ENCODE measurements at regions of chr1 and their contacts with region 1.

Region 1: DNA sequence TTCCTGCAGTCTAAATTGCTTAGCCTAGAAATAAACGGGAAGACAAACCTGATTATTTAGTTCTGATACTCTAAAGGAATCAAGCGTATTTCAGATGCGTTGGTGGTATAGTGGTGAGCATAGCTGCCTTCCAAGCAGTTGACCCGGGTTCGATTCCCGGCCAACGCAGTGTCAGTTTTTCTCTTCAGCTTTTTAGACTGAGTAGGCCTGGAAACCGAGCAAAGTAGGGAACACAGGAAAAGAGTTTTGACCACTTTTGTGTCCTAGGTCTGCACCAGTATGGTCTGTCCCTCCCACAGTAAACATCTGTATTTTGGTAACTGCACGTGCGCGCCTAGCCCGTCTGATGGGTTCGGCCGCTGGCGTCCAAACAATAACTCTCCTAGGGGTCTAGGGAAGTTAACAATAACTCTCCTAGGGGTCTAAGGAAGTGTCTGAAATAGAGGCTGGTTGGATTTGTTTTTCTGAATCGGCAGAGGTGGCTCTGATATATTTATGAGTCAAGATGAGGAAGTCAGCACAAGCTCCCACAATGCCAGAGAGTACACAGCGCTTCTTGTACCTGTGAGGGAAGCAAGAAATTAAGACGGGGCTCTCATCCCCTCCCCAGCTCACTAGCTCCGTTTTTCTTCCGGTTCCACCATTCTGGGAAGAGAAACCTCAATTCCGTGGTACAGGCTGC is 15.6 kb upstream of the HJV start:
- DNase-seq: peak; percentile 94
- H3K4me3 ChIP-seq: peak overlapping the region; percentile 53 to 90 (median 64)
- H3K27ac ChIP-seq: peak overlapping the region; percentile 69
- H3K4me1 ChIP-seq: peaks cover 9% of the 10 kb centered on the region
- H3K27me3 ChIP-seq: no peaks in the 10 kb centered on the region
- CTCF ChIP-seq: no peak
- POLR2A ChIP-seq: no peak

Region 2: DNA sequence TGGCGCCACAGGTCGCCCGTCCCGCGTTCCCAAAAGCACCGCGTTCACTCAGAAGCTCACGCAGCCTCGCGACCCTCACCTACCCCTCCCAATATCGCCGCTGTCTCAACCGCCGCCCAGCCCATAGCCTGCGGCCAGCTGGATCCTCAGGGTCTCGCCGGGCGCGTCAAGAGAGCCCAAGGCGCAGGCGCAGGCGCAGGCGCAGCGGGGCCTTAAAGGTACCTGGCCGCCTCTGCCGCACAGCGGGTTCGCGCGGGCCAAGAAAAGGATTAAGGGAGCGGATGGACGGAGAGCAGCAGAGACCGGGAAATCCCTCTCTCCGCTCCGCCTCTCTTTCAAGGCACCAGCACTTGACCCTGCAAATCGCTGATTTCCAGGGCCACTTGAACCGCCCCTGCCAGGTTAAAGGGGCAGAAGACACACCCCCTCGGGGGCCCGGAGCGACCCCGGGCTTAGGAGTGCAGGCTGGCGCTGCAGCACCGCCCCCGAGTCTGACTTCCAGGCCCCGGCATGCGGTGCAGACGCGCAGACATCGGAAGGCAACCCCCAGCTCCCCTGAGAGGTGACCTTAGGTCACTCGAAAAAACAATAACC is 611.6 kb before region 1 on chr1 and contains the start of gene NBPF20:
- CTCF ChIA-PET with region 1: no interaction called
- POLR2A ChIA-PET with region 1: no interaction called
- dilution Hi-C with region 1: no loop called
- intact Hi-C with region 1: no loop called
- DNase-seq: peak; percentile 78
- H3K4me3 ChIP-seq: peak within 1 kb of the TSS; percentile 44 to 86 (median 45)
- H3K27ac ChIP-seq: peak within 1 kb of the TSS; percentile 23
- H3K4me1 ChIP-seq: peaks cover 3% of the 10 kb centered on the region
- H3K27me3 ChIP-seq: peaks cover 19% of the 10 kb centered on the region in 2 experiments
- CTCF ChIP-seq: no peak
- POLR2A ChIP-seq: peak; percentile 28
- total RNA-seq, gene NBPF20: 5.0 and 5.3 TPM in 2 replicates

Region 3: DNA sequence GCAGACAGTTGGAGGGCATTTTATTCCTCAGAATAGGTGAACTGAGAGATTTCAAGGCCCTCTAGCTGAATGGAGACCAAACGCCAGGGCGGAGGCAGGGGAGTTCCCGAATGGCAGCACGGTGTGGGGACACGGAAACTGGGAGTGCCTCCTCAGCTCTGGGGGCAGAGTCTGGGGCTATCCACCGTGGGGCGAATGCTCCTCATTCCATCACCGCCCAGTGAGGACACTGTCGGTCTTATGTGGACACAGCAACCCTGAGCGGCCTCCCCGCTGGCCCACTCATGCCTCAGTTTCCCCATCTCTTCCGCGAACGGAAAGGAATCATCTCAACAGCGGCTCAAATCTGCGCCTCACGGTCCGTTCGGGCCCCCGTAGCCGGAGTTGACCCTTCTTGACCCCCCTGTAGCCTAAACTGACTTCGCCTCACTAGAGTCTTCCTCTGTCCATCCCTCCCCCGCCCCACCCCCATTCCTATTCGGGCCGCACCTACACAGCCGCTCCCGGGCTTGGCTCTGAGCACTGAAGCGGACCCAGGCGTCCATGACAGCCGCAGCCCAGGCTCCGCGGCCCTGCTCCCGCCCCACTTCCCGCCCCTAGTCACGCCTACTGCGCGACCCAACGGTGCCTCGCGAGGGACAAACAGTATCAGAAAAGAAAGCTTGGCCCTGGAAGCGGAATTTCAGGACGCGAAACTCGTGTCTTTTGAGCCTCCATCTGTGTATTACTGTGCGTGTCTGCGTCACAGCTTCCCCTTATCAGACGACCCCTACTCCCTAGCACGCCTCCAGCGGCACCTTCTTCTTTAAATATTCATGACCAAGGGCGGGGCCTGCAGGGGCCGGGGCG is 118.7 kb before region 1 on chr1 and contains the start of gene PEX11B:
- CTCF ChIA-PET with region 1: no interaction called
- POLR2A ChIA-PET with region 1: no interaction called
- dilution Hi-C with region 1: no loop called
- intact Hi-C with region 1: no loop called
- DNase-seq: peak; percentile 96
- H3K4me3 ChIP-seq: peak within 1 kb of the TSS; percentile 45 to 77 (median 62)
- H3K27ac ChIP-seq: peak within 1 kb of the TSS; percentile 19
- H3K4me1 ChIP-seq: peaks cover 16% of the 10 kb centered on the region
- H3K27me3 ChIP-seq: no peaks in the 10 kb centered on the region
- CTCF ChIP-seq: no peak
- POLR2A ChIP-seq: peak; percentile 63
- total RNA-seq, gene PEX11B: 29.0 and 30.5 TPM in 2 replicates

Region 4: DNA sequence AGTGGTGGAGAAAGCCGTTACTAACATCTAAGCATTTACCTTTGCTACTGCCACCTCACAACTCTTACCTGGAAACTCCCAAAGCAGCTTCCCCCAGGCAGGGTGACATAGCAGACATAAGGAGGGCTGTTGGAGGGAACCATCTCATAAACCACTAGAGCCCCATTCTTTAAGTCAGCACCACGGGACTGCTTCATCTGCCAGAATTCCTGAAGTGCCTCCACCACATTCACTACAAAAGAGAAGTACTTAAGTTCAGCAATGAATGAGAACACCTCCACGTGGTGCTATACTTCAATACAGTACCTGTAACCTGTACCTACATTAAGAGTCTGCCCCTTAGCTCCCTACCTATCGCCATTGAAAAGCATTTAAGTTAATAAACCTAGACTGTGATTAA is 89.6 kb before region 1 on chr1:
- CTCF ChIA-PET with region 1: no interaction called
- POLR2A ChIA-PET with region 1: no interaction called
- dilution Hi-C with region 1: no loop called
- intact Hi-C with region 1: no loop called
- DNase-seq: no peak
- H3K4me3 ChIP-seq: no peak overlapping the region
- H3K27ac ChIP-seq: no peak overlapping the region
- H3K4me1 ChIP-seq: no peaks in the 10 kb centered on the region
- H3K27me3 ChIP-seq: no peaks in the 10 kb centered on the region
- CTCF ChIP-seq: no peak
- POLR2A ChIP-seq: no peak

Region 5: DNA sequence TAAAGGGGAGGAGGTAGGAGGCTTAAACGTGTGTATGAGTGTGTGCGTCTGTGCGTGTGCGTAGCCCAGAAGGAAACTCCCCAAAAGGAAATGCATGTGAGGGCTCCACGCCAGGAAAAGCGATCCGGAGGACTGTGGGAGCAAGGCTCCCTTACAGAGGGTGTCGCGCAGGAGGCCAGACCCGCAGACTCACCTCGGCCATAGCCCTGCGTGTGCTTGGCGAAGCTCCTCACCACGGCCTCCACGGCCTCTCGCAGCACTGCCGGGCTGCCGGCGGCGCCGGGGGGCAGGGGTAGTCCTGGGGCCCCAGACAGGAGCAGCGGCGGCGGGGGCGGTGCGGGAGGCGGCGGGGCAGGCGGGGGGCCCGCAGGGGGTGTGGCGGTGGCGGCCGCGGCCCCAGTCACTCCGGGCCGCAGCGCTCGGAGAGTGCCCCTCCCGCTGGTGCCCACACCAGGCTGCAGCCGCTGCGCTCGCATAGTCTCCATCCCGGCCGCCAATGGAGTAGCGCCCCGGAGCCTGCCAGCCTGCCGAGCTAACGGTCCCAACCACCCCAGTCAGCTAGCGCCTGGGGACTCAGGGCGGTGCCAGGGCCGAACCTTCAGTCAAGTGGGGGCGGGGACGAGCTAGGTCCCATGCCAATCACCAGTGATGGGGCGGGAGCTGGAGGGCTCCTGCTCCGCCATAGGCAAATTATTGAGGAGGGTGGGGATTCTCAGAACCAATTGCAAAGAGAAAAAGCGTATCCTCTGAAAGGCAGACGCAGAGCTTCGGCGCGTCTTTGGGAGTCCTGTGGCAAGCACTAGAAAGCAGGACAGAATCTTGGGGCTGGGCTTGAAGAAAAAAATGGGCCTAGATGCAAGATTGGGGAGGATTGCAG is 79.4 kb before region 1 on chr1 and contains the start of gene LIX1L:
- CTCF ChIA-PET with region 1: interaction called, 10 read pairs
- POLR2A ChIA-PET with region 1: interaction called, 5 read pairs
- dilution Hi-C with region 1: no loop called
- intact Hi-C with region 1: no loop called
- DNase-seq: peak; percentile 97
- H3K4me3 ChIP-seq: peak within 1 kb of the TSS; percentile 71 to 87 (median 74)
- H3K27ac ChIP-seq: peak within 1 kb of the TSS; percentile 96
- H3K4me1 ChIP-seq: peaks cover 50% of the 10 kb centered on the region
- H3K27me3 ChIP-seq: no peaks in the 10 kb centered on the region
- CTCF ChIP-seq: no peak
- POLR2A ChIP-seq: peak; percentile 98
- total RNA-seq, gene LIX1L: 54.9 and 55.6 TPM in 2 replicates

Region 6: GRCh38 chr1:145985502-145986439 is 51.3 kb before region 1 on chr1:
- CTCF ChIA-PET with region 1: no interaction called
- POLR2A ChIA-PET with region 1: no interaction called
- dilution Hi-C with region 1: no loop called
- intact Hi-C with region 1: no loop called
- DNase-seq: peak; percentile 63
- H3K4me3 ChIP-seq: no peak overlapping the region
- H3K27ac ChIP-seq: no peak overlapping the region
- H3K4me1 ChIP-seq: peaks cover 13% of the 10 kb centered on the region
- H3K27me3 ChIP-seq: no peaks in the 10 kb centered on the region
- CTCF ChIP-seq: no peak
- POLR2A ChIP-seq: no peak

Region 7: DNA sequence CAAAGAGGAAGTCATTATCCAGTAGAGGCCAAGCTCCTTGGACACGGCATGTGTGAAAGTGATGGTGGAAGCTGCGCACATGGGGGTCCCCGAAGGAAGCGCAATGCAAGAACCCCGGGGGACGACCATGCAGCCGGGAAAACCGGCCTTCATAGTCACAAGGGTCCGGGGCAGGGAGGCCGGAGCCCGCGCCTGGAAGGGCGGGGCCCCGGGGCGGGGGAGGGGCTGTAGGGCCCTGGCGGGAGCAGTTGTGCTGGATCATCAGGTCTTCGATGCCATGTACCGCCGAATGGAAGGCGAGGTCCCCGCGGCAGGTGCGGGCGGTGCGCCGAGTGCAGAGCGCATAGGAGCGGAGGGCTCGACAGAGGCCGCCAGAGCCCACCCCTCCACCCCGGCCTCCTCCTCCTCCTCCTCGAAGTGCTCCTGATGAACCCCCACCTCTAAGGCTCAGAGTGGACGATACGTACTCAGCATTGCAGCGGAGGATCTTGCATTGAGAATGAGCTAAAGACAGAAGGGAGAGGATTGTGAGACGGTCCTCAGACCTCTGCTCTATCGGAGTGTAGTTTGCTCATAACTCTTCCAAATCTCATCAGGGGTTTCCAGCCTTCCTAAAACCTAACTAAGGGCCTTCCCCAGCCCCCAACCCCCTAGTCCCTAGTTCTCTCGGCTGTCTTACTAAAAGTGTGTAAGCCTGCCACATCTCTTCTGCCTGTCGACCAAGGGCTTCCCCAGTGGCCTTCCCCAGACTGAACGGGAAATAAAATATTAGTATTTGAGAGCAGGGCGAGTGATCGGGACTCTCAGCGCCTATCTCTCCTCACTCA is 17.7 kb before region 1 on chr1:
- CTCF ChIA-PET with region 1: interaction called, 24 read pairs
- POLR2A ChIA-PET with region 1: interaction called, 3 read pairs
- dilution Hi-C with region 1: no loop called
- intact Hi-C with region 1: no loop called
- DNase-seq: no peak
- H3K4me3 ChIP-seq: no peak overlapping the region
- H3K27ac ChIP-seq: no peak overlapping the region
- H3K4me1 ChIP-seq: no peaks in the 10 kb centered on the region
- H3K27me3 ChIP-seq: peaks cover 44 to 55% of the 10 kb centered on the region in 2 experiments
- CTCF ChIP-seq: no peak
- POLR2A ChIP-seq: no peak

Region 8: DNA sequence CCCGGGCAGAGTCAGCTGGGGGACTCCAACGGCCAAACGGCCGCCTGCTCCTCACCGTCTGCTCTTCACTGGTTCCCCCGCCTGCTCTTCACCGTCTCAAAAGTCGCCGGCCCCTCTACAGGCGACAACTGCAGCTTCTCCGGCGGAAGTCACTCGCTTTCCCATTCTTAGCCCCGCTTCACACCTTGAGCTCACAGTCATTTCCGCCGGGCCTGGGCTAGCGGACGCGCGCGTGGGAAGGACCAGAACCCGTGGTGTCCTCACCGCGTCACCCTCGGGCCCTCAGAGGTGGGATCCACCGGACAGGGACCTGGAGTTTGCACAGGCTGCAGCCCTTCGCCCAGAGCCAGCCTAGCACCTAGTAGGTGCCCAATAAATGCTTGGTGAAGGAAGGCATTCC is 12.3 kb after region 1 on chr1:
- CTCF ChIA-PET with region 1: interaction called, 9 read pairs
- POLR2A ChIA-PET with region 1: interaction called, 83 read pairs
- dilution Hi-C with region 1: no loop called
- intact Hi-C with region 1: loop called (anchors 1 kb)
- DNase-seq: no peak
- H3K4me3 ChIP-seq: no peak overlapping the region
- H3K27ac ChIP-seq: no peak overlapping the region
- H3K4me1 ChIP-seq: no peaks in the 10 kb centered on the region
- H3K27me3 ChIP-seq: no peaks in the 10 kb centered on the region
- CTCF ChIP-seq: no peak
- POLR2A ChIP-seq: no peak